ENCODE measurements at regions of chr12 and their contacts with region 1.

Region 1: GRCh38 chr12:57462251-57462911 is 2.8 kb downstream of the GLI1 start:
- DNase-seq: peak; percentile 81
- ATAC-seq: peak; percentile 82
- H3K4me3 ChIP-seq: peak overlapping the region; percentile 68
- H3K27ac ChIP-seq: no peak overlapping the region
- H3K4me1 ChIP-seq: peaks cover 35% of the 10 kb centered on the region
- H3K27me3 ChIP-seq: 0 out of 4 replicates have a peak, but pooled peaks cover 0 to 4% of the 10 kb centered on the region in 2 experiments
- CTCF ChIP-seq: peak; percentile 94 to 99 (median 98)
- EP300 ChIP-seq: no peak
- POLR2A ChIP-seq: 0 out of 2 replicates have a peak, but pooled peaks have one; percentile 24
- RAD21 ChIP-seq: peak; percentile 75

Region 2: DNA sequence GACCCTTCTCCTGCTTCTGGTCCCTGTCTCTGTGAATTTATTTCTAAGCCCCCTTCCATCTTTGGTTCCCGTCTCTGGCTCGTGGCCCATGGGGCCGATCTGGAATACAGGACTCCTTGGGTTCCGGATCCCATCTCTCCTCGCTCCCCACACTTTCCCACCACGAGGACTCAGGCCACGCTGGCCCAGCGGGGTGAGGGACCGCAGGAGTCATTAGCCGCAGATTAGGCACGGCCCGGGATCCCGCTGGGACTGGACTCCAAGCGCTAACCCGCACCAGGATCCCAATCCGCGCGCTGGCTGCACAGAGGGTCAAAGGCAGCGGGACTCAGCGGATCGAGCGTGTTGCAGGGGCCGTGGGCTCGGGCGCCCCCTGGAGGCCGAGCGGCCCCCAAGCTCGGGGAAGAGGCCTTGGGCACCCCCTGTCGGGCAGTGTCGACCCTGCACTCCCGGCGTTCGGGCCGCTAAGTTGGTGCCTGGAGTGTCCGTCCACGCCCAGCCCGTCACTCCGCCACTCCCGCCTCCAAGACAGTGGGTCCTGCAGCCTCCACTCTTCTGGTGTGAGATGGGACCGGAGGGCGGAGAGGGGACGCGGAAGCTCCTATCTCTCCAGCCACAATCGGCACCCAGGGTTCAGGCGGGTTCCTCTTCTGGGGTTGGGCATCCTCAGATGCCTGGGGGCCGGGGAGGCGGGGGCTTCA is 223.4 kb before region 1 on chr12:
- CTCF ChIA-PET with region 1: interaction called, 90 read pairs
- POLR2A ChIA-PET with region 1: interaction called, 5 read pairs
- RAD21 ChIA-PET with region 1: interaction called, 4 read pairs
- SMC1A ChIA-PET with region 1: interaction called, 6 read pairs
- in situ Hi-C with region 1: no loop called
- intact Hi-C with region 1: no loop called
- DNase-seq: no peak
- ATAC-seq: peak; percentile 72
- H3K4me3 ChIP-seq: peak overlapping the region; percentile 68
- H3K27ac ChIP-seq: no peak overlapping the region
- H3K4me1 ChIP-seq: peaks cover 47% of the 10 kb centered on the region
- H3K27me3 ChIP-seq: peaks cover 5 to 8% of the 10 kb centered on the region in 2 experiments; a peak in 3 of 4 replicates
- CTCF ChIP-seq: peak; percentile 100; a peak in 5 of 6 replicates
- EP300 ChIP-seq: no peak
- POLR2A ChIP-seq: peak; percentile 66; the same call in 1 of the 2 replicates
- RAD21 ChIP-seq: peak; percentile 88

Region 3: DNA sequence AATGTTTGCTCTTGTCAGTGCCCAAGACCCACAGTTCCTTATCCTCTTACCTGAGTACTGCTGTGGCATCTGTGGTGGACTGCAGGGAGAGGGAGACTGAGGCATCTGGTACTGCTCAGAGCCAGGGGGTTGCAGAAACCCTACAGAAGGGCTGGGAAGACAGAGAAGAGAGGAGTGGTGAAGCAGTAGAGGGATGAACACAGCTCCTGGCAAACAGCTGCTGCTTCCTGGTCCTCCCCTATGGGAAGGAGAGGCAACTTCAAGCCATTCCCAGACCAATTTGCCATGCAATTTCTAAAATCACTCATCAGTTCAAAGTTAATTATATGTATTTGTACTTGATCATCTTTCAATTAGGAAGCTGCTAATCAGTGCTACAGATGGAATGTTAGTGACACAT is 195.7 kb before region 1 on chr12:
- CTCF ChIA-PET with region 1: interaction called, 33 read pairs
- POLR2A ChIA-PET with region 1: interaction called, 3 read pairs
- RAD21 ChIA-PET with region 1: interaction called, 4 read pairs
- SMC1A ChIA-PET with region 1: interaction called, 11 read pairs
- in situ Hi-C with region 1: loop called (anchors 5 kb)
- intact Hi-C with region 1: no loop called
- DNase-seq: no peak
- ATAC-seq: no peak
- H3K4me3 ChIP-seq: no peak overlapping the region
- H3K27ac ChIP-seq: no peak overlapping the region
- H3K4me1 ChIP-seq: no peaks in the 10 kb centered on the region
- H3K27me3 ChIP-seq: no peaks in the 10 kb centered on the region
- CTCF ChIP-seq: no peak
- EP300 ChIP-seq: no peak
- POLR2A ChIP-seq: no peak
- RAD21 ChIP-seq: no peak

Region 4: DNA sequence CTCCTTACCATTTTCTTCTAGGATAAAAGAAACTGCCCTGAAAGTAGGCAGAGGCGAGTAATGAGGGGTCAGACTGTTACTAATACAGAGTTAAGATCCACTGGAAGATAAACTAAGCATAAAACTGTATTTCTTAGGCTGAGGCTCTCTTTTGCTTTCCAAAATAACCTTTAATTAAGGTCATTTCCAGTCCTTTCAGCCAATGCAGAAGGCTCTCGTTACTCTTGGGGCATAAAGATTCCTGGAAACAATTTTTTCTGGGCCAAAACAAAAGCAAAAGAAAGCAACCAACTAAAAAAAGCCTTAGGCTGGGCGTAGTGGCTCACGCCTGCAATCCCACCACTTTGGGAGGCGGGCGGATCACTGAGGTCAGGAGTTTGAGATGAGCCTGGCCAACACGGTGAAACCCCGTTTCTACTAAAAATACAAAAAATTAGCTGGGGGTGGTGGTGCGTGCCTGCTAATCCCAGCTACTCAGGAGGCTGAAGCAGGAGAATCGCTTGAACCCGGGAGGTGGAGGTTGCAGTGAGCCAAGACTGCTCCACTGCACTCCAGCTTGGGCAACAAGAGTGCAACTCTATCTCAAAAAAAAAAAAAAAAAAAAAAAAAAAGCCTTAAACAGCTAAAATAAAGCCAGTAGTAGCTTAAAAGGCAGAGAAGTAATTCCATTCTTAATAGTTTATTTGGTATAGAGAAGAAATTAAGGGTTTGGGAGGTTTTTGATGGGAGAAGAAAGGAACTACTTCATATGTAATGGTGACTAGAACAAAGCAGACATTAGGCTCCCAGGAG is 142.5 kb before region 1 on chr12:
- CTCF ChIA-PET with region 1: interaction called, 4 read pairs
- POLR2A ChIA-PET with region 1: no interaction called
- RAD21 ChIA-PET with region 1: no interaction called
- SMC1A ChIA-PET with region 1: no interaction called
- in situ Hi-C with region 1: loop called (anchors 10 kb)
- intact Hi-C with region 1: no loop called
- DNase-seq: no peak
- ATAC-seq: no peak
- H3K4me3 ChIP-seq: no peak overlapping the region
- H3K27ac ChIP-seq: no peak overlapping the region
- H3K4me1 ChIP-seq: no peaks in the 10 kb centered on the region
- H3K27me3 ChIP-seq: no peaks in the 10 kb centered on the region
- CTCF ChIP-seq: no peak
- EP300 ChIP-seq: no peak
- POLR2A ChIP-seq: no peak
- RAD21 ChIP-seq: no peak

Region 5: GRCh38 chr12:57404966-57405640 is 57.3 kb before region 1 on chr12:
- CTCF ChIA-PET with region 1: no interaction called
- POLR2A ChIA-PET with region 1: no interaction called
- RAD21 ChIA-PET with region 1: no interaction called
- SMC1A ChIA-PET with region 1: no interaction called
- in situ Hi-C with region 1: no loop called
- intact Hi-C with region 1: no loop called
- DNase-seq: no peak
- ATAC-seq: 0 out of 3 replicates have a peak, but pooled peaks have one; percentile 19
- H3K4me3 ChIP-seq: no peak overlapping the region
- H3K27ac ChIP-seq: no peak overlapping the region
- H3K4me1 ChIP-seq: no peaks in the 10 kb centered on the region
- H3K27me3 ChIP-seq: no peaks in the 10 kb centered on the region
- CTCF ChIP-seq: no peak
- EP300 ChIP-seq: no peak
- POLR2A ChIP-seq: no peak
- RAD21 ChIP-seq: no peak

Region 6: DNA sequence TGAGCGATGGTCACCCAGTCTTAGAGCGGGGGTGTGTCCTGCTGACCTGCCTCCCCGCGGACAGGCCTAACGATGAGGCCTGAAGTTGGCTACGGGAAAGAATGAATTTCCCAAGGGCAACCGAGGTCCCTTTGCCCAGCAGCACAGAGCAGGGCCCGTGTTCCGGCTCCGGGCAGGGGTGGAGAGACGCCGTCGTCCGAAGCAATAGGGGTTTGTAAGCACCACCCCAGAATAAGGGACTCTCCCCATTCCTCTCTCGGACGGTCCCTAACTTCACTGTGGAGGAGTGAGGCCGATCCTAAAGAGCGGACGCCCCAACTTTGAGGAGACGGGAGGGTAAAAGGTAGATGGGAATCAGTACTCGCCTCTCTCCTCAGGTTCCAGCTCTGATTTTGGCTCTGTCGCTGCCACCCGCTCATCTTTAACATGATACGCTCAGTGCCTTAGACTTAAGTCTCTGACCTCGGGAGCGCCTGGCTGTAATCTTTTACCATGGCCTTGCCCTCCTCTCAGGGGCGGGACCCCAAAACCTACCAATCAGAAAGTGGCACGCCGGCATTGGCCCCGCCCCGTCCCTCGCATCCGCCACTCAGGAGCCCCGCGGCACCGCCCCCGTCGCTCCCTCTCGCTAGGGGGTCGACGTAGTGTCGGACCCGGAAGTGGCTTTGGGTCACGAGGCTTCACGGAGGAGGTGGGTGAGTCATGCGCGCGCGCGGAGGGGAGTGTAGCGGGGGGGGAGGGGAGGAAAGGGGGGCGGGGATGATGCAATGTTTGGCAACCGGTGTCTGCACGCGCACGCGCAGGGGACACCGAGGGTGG is 57.9 kb after region 1 on chr12 and contains the start of gene DDIT3:
- CTCF ChIA-PET with region 1: interaction called, 16 read pairs
- POLR2A ChIA-PET with region 1: interaction called, 10 read pairs
- RAD21 ChIA-PET with region 1: interaction called, 11 read pairs
- SMC1A ChIA-PET with region 1: interaction called, 5 read pairs
- in situ Hi-C with region 1: no loop called
- intact Hi-C with region 1: loop called (anchors 5 kb)
- DNase-seq: peak; percentile 91
- ATAC-seq: peak; percentile 83
- H3K4me3 ChIP-seq: peak within 1 kb of the TSS; percentile 98
- H3K27ac ChIP-seq: peak within 1 kb of the TSS; percentile 99
- H3K4me1 ChIP-seq: peaks cover 29% of the 10 kb centered on the region
- H3K27me3 ChIP-seq: no peaks in the 10 kb centered on the region
- CTCF ChIP-seq: no peak
- EP300 ChIP-seq: peak in 1 of 2 experiments; percentile 58; a peak in 2 of 4 replicates
- POLR2A ChIP-seq: peak; percentile 91
- RAD21 ChIP-seq: no peak
- polyA plus RNA-seq, gene DDIT3: 26.8 to 28.9 TPM

Region 7: GRCh38 chr12:57590536-57591479 is 128.4 kb after region 1 on chr12 and contains the start of gene PIP4K2C:
- CTCF ChIA-PET with region 1: interaction called, 25 read pairs
- POLR2A ChIA-PET with region 1: no interaction called
- RAD21 ChIA-PET with region 1: no interaction called
- SMC1A ChIA-PET with region 1: interaction called, 5 read pairs
- in situ Hi-C with region 1: no loop called
- intact Hi-C with region 1: no loop called
- DNase-seq: peak; percentile 44
- ATAC-seq: peak; percentile 99
- H3K4me3 ChIP-seq: peak within 1 kb of the TSS; percentile 98
- H3K27ac ChIP-seq: peak within 1 kb of the TSS; percentile 51
- H3K4me1 ChIP-seq: peaks cover 4% of the 10 kb centered on the region; the same call in 1 of the 2 replicates
- H3K27me3 ChIP-seq: no peaks in the 10 kb centered on the region
- CTCF ChIP-seq: no peak
- EP300 ChIP-seq: no peak
- POLR2A ChIP-seq: peak; percentile 93
- RAD21 ChIP-seq: no peak
- polyA plus RNA-seq, gene PIP4K2C: 4.8 to 6.0 TPM

Region 8: DNA sequence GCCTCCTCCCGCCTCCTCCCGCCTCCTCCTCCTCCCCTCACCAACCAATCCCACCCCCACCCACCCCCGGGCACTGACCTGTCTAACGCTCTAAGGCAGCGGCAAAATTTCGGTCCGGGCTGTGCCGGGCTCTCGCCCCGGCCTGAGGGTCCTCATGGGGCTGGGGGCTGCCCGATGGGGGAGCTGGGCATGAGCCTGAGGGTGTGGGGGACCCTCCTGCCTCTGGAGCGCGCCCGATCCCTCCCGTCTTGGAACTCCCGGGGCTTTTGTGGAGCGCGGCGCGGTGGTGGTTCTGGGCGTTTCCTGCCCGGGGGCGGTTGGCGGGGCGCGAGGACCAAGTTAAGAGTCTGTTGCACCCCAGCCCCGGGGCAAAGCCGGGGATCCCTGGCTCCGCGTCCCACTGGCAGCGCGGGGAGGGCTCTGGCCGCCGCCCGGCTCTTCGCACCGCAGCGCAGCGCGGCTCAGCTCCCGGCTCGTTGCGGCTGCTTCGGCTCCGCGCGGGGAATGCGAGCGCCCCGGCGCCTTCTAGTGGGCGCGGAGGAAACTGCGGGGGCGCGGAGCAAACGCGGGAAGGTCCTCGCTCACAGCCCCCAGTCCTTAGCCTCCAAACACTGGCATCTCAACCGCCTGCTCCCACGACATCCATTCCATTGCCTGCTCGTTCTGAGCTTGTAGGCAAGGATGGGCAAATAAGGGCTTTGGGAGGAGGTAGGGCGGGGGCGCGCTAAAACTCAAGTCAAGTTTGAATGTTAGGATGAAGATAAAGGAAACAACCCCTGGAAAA is 170.5 kb after region 1 on chr12 and contains the start of gene B4GALNT1:
- CTCF ChIA-PET with region 1: interaction called, 11 read pairs
- POLR2A ChIA-PET with region 1: no interaction called
- RAD21 ChIA-PET with region 1: interaction called, 3 read pairs
- SMC1A ChIA-PET with region 1: interaction called, 9 read pairs
- in situ Hi-C with region 1: no loop called
- intact Hi-C with region 1: no loop called
- DNase-seq: no peak
- ATAC-seq: peak; percentile 95
- H3K4me3 ChIP-seq: peak within 1 kb of the TSS; percentile 49; the same call in 1 of the 2 replicates
- H3K27ac ChIP-seq: no peak within 1 kb of the TSS
- H3K4me1 ChIP-seq: no peaks in the 10 kb centered on the region
- H3K27me3 ChIP-seq: peaks cover 17% of the 10 kb centered on the region in 2 experiments
- CTCF ChIP-seq: peak; percentile 77 to 93 (median 86)
- EP300 ChIP-seq: no peak
- POLR2A ChIP-seq: no peak
- RAD21 ChIP-seq: peak; percentile 53
- polyA plus RNA-seq, gene B4GALNT1: not detected

Region 9: GRCh38 chr12:57657744-57658143 is 195.4 kb after region 1 on chr12:
- CTCF ChIA-PET with region 1: no interaction called
- POLR2A ChIA-PET with region 1: no interaction called
- RAD21 ChIA-PET with region 1: no interaction called
- SMC1A ChIA-PET with region 1: no interaction called
- in situ Hi-C with region 1: no loop called
- intact Hi-C with region 1: no loop called
- DNase-seq: no peak
- ATAC-seq: no peak
- H3K4me3 ChIP-seq: no peak overlapping the region
- H3K27ac ChIP-seq: no peak overlapping the region
- H3K4me1 ChIP-seq: no peaks in the 10 kb centered on the region
- H3K27me3 ChIP-seq: no peaks in the 10 kb centered on the region
- CTCF ChIP-seq: no peak
- EP300 ChIP-seq: no peak
- POLR2A ChIP-seq: no peak
- RAD21 ChIP-seq: no peak